Gastrocnemius medialis (tissue), 4 donors: ENCODE measurements at regions of chr9 and their contacts with region 1.

Region 1: GRCh38 chr9:121369595-121370265 is at the start of gene STOM:
- DNase-seq: peak; percentile 89 to 92
- ATAC-seq: peak; percentile 68 to 72
- H3K4me3 ChIP-seq: peak within 1 kb of the TSS; percentile 60 to 85 (median 73)
- H3K27ac ChIP-seq: peak within 1 kb of the TSS; percentile 94 to 99 (median 96)
- H3K4me1 ChIP-seq: peaks cover 69 to 78% of the 10 kb centered on the region in 2 donors
- H3K27me3 ChIP-seq: no peaks in the 10 kb centered on the region
- CTCF ChIP-seq: peak in 1 of 5 experiments; percentile 27
- POLR2A ChIP-seq: peak; percentile 99 to 100
- total RNA-seq, gene STOM: 60.0 to 89.5 (median 76.3) TPM

Region 2: GRCh38 chr9:121278535-121279261 is 91.0 kb before region 1 on chr9:
- in situ Hi-C with region 1: loop called in 2 of 4 experiments (anchors 10 kb)
- intact Hi-C with region 1: loop called (anchors 5 kb)
- DNase-seq: peak; percentile 51 to 70
- ATAC-seq: peak; percentile 55 to 70
- H3K4me3 ChIP-seq: no peak overlapping the region
- H3K27ac ChIP-seq: peak overlapping the region; percentile 61 to 98 (median 92)
- H3K4me1 ChIP-seq: peaks cover 50 to 58% of the 10 kb centered on the region in 2 donors
- H3K27me3 ChIP-seq: no peaks in the 10 kb centered on the region
- CTCF ChIP-seq: peak; percentile 82 to 90 (median 88)
- POLR2A ChIP-seq: peak in 1 of 2 donors; percentile 25

Region 3: GRCh38 chr9:121455527-121456239 is 86.0 kb after region 1 on chr9:
- in situ Hi-C with region 1: no loop called
- intact Hi-C with region 1: no loop called
- DNase-seq: no peak
- ATAC-seq: no peak
- H3K4me3 ChIP-seq: no peak overlapping the region
- H3K27ac ChIP-seq: no peak overlapping the region
- H3K4me1 ChIP-seq: peaks cover 0 to 2% of the 10 kb centered on the region in 2 donors
- H3K27me3 ChIP-seq: no peaks in the 10 kb centered on the region
- CTCF ChIP-seq: no peak
- POLR2A ChIP-seq: no peak

Region 4: GRCh38 chr9:121576281-121577075 is 206.7 kb after region 1 on chr9:
- in situ Hi-C with region 1: no loop called
- intact Hi-C with region 1: no loop called
- DNase-seq: peak in 1 of 2 donors; percentile 57
- ATAC-seq: peak; percentile 65 to 67
- H3K4me3 ChIP-seq: no peak overlapping the region
- H3K27ac ChIP-seq: peak overlapping the region; percentile 42 to 71 (median 60)
- H3K4me1 ChIP-seq: peaks cover 39 to 49% of the 10 kb centered on the region in 2 donors
- H3K27me3 ChIP-seq: no peaks in the 10 kb centered on the region
- CTCF ChIP-seq: peak in 4 of 5 experiments; percentile 6 to 33 (median 26)
- POLR2A ChIP-seq: no peak

Region 5: DNA sequence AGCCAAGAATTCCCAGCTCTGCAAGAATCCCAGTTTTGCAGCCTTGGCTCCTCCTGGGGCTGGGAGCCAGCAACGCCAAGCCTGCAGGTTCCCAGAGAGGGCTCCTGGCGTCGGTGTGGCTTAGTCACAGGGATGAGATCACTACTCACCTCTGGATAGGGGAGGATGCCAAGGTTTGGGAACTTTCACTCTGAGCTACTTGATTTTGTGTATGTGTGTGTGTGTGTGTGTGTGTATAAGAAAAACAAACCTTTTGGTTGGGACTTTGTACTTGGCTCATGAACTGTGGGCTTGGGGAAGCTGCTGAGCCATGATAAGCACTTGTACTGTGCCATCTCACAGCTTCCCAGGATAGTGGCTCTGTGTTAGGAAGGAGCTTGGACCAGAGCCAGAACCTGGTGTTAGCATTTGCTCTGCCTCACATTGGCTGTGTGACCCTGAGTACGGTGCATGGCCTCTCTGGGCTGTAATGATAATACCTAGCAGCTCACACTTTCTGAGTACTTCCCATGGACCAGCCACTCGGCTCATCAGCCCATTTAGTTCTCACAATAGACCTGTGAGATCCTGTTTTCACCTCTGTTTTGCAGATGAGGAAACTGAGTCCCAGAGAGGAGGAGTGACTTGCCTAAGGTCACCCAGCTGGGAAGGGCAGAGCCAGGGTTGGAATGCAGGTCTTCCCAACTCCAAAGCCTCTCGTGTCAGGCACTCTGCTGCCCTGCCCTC is 240.3 kb after region 1 on chr9:
- in situ Hi-C with region 1: no loop called
- intact Hi-C with region 1: loop called (anchors 10 kb)
- DNase-seq: peak; percentile 71 to 89
- ATAC-seq: peak; percentile 56 to 59
- H3K4me3 ChIP-seq: no peak overlapping the region
- H3K27ac ChIP-seq: peak overlapping the region; percentile 85 to 96 (median 92)
- H3K4me1 ChIP-seq: peaks cover 94 to 98% of the 10 kb centered on the region in 2 donors
- H3K27me3 ChIP-seq: no peaks in the 10 kb centered on the region
- CTCF ChIP-seq: peak in 2 of 5 experiments; percentile 10 to 44
- POLR2A ChIP-seq: no peak

Region 6: GRCh38 chr9:121750715-121751623 is 381.2 kb after region 1 on chr9:
- in situ Hi-C with region 1: no loop called
- intact Hi-C with region 1: no loop called
- DNase-seq: no peak
- ATAC-seq: no peak
- H3K4me3 ChIP-seq: no peak overlapping the region
- H3K27ac ChIP-seq: peak overlapping the region; percentile 63 to 91 (median 74)
- H3K4me1 ChIP-seq: peaks cover 79 to 88% of the 10 kb centered on the region in 2 donors
- H3K27me3 ChIP-seq: no peaks in the 10 kb centered on the region
- CTCF ChIP-seq: no peak
- POLR2A ChIP-seq: no peak